HepG2 (cell line): ENCODE measurements at regions of chr14 and their contacts with region 1.

Region 1: GRCh38 chr14:75560962-75561432 is 17.4 kb upstream of the FLVCR2 start:
- DNase-seq: peak; percentile 67
- ATAC-seq: peak; percentile 97
- H3K4me3 ChIP-seq: no peak overlapping the region
- H3K27ac ChIP-seq: no peak overlapping the region
- H3K4me1 ChIP-seq: peaks cover 8% of the 10 kb centered on the region; the same call in 1 of the 2 replicates
- H3K27me3 ChIP-seq: peaks cover 0 to 21% of the 10 kb centered on the region in 2 experiments; a peak in 1 of 5 replicates
- CTCF ChIP-seq: peak; percentile 95
- EP300 ChIP-seq: no peak
- POLR2A ChIP-seq: no peak
- RAD21 ChIP-seq: peak; percentile 90

Region 2: GRCh38 chr14:74932401-74932901 is 628.5 kb before region 1 on chr14:
- CTCF ChIA-PET with region 1: no interaction called
- POLR2A ChIA-PET with region 1: no interaction called
- in situ Hi-C with region 1: no loop called
- intact Hi-C with region 1: no loop called
- DNase-seq: no peak
- ATAC-seq: peak; percentile 41
- H3K4me3 ChIP-seq: peak overlapping the region; percentile 5 to 61 (median 49); a peak in 5 of 6 replicates
- H3K27ac ChIP-seq: no peak overlapping the region
- H3K4me1 ChIP-seq: peaks cover 39% of the 10 kb centered on the region
- H3K27me3 ChIP-seq: peaks cover 0 to 2% of the 10 kb centered on the region in 2 experiments; a peak in 2 of 5 replicates
- CTCF ChIP-seq: no peak
- EP300 ChIP-seq: no peak
- POLR2A ChIP-seq: no peak
- RAD21 ChIP-seq: no peak

Region 3: GRCh38 chr14:75307700-75308379 is 253.2 kb before region 1 on chr14:
- CTCF ChIA-PET with region 1: interaction called, 14 read pairs
- POLR2A ChIA-PET with region 1: no interaction called
- in situ Hi-C with region 1: loop called (anchors 5 kb)
- intact Hi-C with region 1: loop called (anchors 1 kb)
- DNase-seq: peak; percentile 63
- ATAC-seq: peak; percentile 91
- H3K4me3 ChIP-seq: no peak overlapping the region
- H3K27ac ChIP-seq: no peak overlapping the region
- H3K4me1 ChIP-seq: peaks cover 12% of the 10 kb centered on the region
- H3K27me3 ChIP-seq: peaks cover 0 to 4% of the 10 kb centered on the region in 2 experiments; a peak in 1 of 5 replicates
- CTCF ChIP-seq: peak; percentile 93
- EP300 ChIP-seq: no peak
- POLR2A ChIP-seq: no peak
- RAD21 ChIP-seq: peak; percentile 81

Region 4: DNA sequence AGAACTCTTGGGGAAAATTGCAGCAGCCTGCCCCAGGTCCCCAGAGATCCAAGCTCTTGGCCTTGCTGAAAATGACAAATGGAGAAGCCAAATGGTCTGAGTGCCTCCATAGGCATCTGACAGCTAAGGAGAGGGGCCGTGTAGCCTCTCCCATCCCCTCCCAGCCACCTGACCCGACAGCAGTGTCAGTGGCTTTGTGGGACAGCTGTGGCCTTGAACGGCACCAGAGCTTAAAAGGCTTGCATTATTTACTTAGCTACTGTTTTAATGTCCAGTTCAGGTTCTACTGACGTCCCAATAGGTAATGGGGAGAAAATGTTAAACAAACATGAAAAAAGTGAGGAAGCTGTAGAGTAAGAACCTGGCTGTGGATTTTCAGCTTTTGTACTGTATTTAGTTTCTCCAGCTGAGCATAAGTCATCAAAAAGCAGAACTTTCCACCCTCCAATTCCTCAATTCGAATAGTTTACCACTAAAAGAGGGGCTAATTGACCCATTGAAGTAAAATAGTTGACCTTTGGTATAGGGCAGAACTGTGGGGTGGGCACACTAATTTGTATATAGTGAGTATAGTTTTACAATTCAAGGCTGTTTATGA is 232.3 kb before region 1 on chr14:
- CTCF ChIA-PET with region 1: no interaction called
- POLR2A ChIA-PET with region 1: no interaction called
- in situ Hi-C with region 1: no loop called
- intact Hi-C with region 1: loop called (anchors 5 kb)
- DNase-seq: peak; percentile 80
- ATAC-seq: peak; percentile 86
- H3K4me3 ChIP-seq: peak overlapping the region in 1 of 3 experiments; percentile 11; a peak in 2 of 6 replicates
- H3K27ac ChIP-seq: no peak overlapping the region
- H3K4me1 ChIP-seq: peaks cover 36% of the 10 kb centered on the region
- H3K27me3 ChIP-seq: peaks cover 0 to 7% of the 10 kb centered on the region in 2 experiments; a peak in 2 of 5 replicates
- CTCF ChIP-seq: no peak
- EP300 ChIP-seq: peak in 1 of 2 experiments; percentile 51; a peak in 2 of 4 replicates
- POLR2A ChIP-seq: no peak
- RAD21 ChIP-seq: no peak

Region 5: DNA sequence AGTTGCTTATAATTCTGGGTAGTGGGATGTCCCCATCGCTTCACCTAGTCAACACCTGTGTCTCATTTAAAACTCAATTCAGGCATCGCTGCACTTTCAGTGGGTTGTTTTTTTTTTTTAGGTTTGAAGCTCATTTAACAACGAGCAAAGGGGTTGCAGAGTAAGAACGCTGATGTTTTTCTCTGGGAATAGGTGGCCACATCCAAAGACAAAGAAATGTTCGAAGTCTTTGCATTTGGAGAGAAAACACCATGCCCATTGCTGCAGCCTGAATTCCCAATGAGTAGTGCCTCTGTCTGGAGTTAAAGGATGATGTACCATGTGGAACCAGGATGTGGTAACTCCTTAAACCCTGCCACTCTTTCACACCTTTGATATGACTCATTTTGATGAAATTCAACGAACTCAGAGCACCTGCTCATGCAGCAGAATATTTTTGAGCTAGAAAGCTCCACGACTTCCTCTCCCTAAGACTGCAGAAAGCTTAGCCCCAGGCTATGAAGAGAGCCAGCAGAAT is 73.8 kb before region 1 on chr14:
- CTCF ChIA-PET with region 1: interaction called, 13 read pairs
- POLR2A ChIA-PET with region 1: no interaction called
- in situ Hi-C with region 1: no loop called
- intact Hi-C with region 1: loop called (anchors 2 kb)
- DNase-seq: no peak
- ATAC-seq: no peak
- H3K4me3 ChIP-seq: no peak overlapping the region
- H3K27ac ChIP-seq: no peak overlapping the region
- H3K4me1 ChIP-seq: 0 out of 2 replicates have a peak, but pooled peaks cover 9% of the 10 kb centered on the region
- H3K27me3 ChIP-seq: no peaks in the 10 kb centered on the region; a peak in 1 of 5 replicates
- CTCF ChIP-seq: no peak
- EP300 ChIP-seq: no peak
- POLR2A ChIP-seq: no peak
- RAD21 ChIP-seq: no peak

Region 6: DNA sequence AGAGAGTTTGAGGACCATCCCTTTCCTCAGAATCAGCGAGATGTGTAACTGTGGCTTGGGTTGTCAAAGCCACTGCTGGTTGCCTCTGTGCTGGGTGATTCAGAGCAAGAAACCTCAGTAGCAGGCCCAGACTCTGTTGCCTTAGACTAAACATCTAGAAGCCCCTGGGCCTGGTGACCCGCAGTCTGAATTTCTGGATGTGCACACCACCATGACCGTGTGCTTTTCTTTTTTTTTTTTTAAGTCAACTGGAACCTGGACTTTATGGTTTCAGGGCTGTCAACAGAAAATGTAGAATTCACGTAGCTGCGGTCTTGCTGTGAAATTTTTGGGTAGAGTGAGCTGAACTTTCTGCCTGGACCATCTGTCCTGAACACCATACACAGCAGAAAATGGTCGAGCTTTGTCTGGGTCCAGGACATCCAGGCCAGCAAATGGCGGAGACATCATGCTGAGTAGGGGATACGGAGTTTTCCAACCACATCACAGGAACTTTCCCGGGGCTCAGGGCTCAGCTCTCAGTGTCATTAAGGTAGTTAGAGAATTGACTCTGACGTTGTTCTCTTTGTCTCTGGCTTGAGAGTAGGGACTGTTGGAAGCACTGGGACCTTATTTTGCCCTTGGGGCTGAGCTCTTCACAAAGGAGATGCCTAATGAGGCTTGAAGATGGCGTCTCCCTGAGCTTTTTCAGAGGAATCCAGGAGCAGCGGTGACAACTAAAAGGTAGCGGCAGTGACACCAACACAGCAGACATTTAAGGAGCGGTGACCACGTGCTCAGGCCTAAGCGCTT is 61.7 kb before region 1 on chr14:
- CTCF ChIA-PET with region 1: no interaction called
- POLR2A ChIA-PET with region 1: no interaction called
- in situ Hi-C with region 1: no loop called
- intact Hi-C with region 1: no loop called
- DNase-seq: no peak
- ATAC-seq: no peak
- H3K4me3 ChIP-seq: no peak overlapping the region
- H3K27ac ChIP-seq: no peak overlapping the region
- H3K4me1 ChIP-seq: peaks cover 3% of the 10 kb centered on the region; the same call in 1 of the 2 replicates
- H3K27me3 ChIP-seq: no peaks in the 10 kb centered on the region; a peak in 2 of 5 replicates
- CTCF ChIP-seq: no peak
- EP300 ChIP-seq: no peak
- POLR2A ChIP-seq: no peak
- RAD21 ChIP-seq: no peak

Region 7: DNA sequence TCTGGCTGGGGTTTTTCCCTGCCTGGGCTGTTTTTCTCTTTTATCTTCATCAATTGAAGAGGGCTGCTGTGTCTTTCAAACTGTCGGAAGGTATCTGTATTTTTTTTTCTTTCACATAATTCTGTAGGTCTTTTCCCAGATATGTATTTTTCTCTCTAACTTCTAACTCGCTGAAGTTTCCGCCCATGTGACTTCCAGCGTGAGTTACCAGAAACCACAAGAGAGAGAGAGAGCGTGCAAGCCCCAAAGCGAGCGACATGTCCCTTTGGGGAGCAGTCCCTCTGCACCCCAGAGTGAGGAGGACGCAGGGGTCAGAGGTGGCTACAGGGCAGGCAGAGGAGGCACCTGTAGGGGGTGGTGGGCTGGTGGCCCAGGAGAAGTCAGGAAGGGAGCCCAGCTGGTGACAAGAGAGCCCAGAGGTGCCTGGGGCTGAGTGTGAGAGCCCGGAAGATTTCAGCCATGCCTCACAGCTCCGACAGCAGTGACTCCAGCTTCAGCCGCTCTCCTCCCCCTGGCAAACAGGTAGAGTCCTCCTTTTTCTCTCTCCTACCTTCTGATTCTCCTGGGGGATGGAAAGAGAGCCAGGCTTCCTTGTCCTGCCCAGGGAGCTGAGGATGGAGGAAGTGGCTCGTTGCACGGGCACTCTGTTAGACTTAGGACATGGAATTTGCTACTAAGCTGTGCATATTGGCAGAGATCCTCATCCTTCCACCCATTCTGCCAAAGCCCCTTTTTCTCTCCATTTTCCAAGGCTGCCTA is 38.6 kb before region 1 on chr14 and contains the start of gene BATF:
- CTCF ChIA-PET with region 1: interaction called, 20 read pairs
- POLR2A ChIA-PET with region 1: interaction called, 6 read pairs
- in situ Hi-C with region 1: loop called (anchors 5 kb)
- intact Hi-C with region 1: loop called (anchors 1 kb)
- DNase-seq: no peak
- ATAC-seq: no peak
- H3K4me3 ChIP-seq: peak within 1 kb of the TSS in 1 of 3 experiments; percentile 4; a peak in 1 of 6 replicates
- H3K27ac ChIP-seq: no peak within 1 kb of the TSS
- H3K4me1 ChIP-seq: peaks cover 33% of the 10 kb centered on the region
- H3K27me3 ChIP-seq: peaks cover 0 to 2% of the 10 kb centered on the region in 2 experiments; a peak in 2 of 5 replicates
- CTCF ChIP-seq: no peak
- EP300 ChIP-seq: no peak
- POLR2A ChIP-seq: no peak
- RAD21 ChIP-seq: no peak
- total RNA-seq, gene BATF: 0.22 and 0.44 TPM in 2 replicates

Region 8: GRCh38 chr14:75543786-75544185 is 17.2 kb before region 1 on chr14:
- CTCF ChIA-PET with region 1: no interaction called
- POLR2A ChIA-PET with region 1: interaction called, 3 read pairs
- in situ Hi-C with region 1: no loop called
- intact Hi-C with region 1: loop called (anchors 2 kb)
- DNase-seq: no peak
- ATAC-seq: no peak
- H3K4me3 ChIP-seq: no peak overlapping the region
- H3K27ac ChIP-seq: no peak overlapping the region
- H3K4me1 ChIP-seq: peaks cover 41% of the 10 kb centered on the region
- H3K27me3 ChIP-seq: no peaks in the 10 kb centered on the region
- CTCF ChIP-seq: no peak
- EP300 ChIP-seq: no peak
- POLR2A ChIP-seq: no peak
- RAD21 ChIP-seq: no peak

Region 9: GRCh38 chr14:75572114-75572513 is 11.1 kb after region 1 on chr14:
- CTCF ChIA-PET with region 1: no interaction called
- POLR2A ChIA-PET with region 1: no interaction called
- in situ Hi-C with region 1: no loop called
- intact Hi-C with region 1: no loop called
- DNase-seq: no peak
- ATAC-seq: no peak
- H3K4me3 ChIP-seq: no peak overlapping the region
- H3K27ac ChIP-seq: no peak overlapping the region
- H3K4me1 ChIP-seq: peaks cover 3% of the 10 kb centered on the region
- H3K27me3 ChIP-seq: peaks cover 5 to 28% of the 10 kb centered on the region in 2 experiments; a peak in 3 of 5 replicates
- CTCF ChIP-seq: no peak
- EP300 ChIP-seq: no peak
- POLR2A ChIP-seq: no peak
- RAD21 ChIP-seq: no peak